Heart right ventricle (tissue), 16 donors: ENCODE measurements at regions of chr5 and their contacts with region 1.

Region 1: GRCh38 chr5:140220032-140220697 is 45.2 kb downstream of the CYSTM1 start:
- DNase-seq: no peak
- ATAC-seq: no peak
- H3K4me3 ChIP-seq: no peak overlapping the region
- H3K27ac ChIP-seq: peak overlapping the region in 9 of 10 donors; percentile 4 to 87 (median 80)
- H3K4me1 ChIP-seq: peaks cover 18 to 95% (median 81%) of the 10 kb centered on the region in 9 donors
- H3K27me3 ChIP-seq: no peaks in the 10 kb centered on the region
- CTCF ChIP-seq: no peak

Region 2: DNA sequence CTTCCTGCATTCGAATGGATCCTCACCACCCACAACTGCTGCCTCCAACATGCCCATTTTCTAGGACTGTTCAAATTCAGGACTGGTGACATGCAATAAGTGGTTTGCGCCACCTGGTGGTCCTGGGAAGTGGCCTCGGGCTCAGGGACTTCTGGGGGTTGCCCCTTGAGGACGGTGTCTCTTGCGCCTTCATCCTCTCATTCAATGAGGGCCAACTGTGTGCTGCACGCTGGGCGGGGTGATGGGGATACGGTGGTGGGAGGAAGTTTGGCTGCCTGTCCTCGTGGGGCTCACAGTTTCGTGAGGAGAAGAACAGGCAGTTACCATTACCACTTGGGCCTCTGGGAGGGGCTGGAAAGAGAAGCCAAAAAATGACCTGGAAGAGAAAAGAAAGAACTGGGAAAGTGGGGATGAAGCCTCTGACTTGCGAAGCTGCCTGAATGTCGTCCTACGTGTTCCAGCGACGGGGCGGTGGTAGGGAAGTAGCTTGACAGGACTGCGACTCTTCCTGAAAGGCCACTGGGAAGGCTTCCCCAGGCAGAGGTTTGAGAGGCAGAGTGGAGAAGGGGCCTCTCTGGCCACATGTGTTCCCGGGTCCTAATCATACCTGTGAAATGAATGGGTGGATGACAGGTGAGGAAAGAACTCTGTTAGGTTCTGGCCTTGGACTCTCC is 375.6 kb before region 1 on chr5:
- intact Hi-C with region 1: no loop called
- DNase-seq: peak; percentile 66 to 69
- ATAC-seq: peak in 4 of 8 donors; percentile 29 to 37 (median 35)
- H3K4me3 ChIP-seq: no peak overlapping the region
- H3K27ac ChIP-seq: no peak overlapping the region
- H3K4me1 ChIP-seq: peaks cover 3 to 25% (median 17%) of the 10 kb centered on the region in 9 donors
- H3K27me3 ChIP-seq: peaks cover 0 to 44% (median 0%) of the 10 kb centered on the region in 7 donors
- CTCF ChIP-seq: peak; percentile 38 to 76 (median 69)

Region 3: DNA sequence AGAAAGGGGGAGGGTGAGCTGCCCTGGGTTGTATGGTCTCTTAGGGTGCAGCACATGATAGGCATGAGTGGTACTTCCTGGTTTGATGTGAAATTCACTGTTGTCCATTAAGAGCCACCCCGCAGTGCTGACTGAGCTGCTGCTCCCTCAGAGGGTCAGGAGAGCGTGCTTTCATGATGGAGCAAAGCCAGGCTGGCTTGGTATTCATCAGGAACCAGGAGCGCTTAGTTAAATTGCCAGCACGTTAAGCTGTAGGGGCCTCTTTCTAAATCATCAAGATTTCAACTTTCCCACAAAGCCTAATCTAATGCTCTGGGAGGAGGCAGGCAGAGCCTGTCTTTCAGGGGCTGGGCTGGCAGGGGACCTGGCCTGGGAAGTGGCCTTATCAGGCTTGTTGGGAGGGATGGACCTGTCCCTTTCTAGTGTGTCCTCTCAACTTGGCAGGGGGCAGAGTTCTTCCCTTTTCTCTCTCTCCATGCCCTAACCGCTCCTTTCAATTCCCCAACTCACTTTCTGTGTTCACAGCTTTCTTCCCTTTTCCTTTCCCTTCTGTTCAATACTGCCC is 37.3 kb before region 1 on chr5:
- intact Hi-C with region 1: loop called in 6 of 10 experiments (anchors 5 kb)
- DNase-seq: peak in 1 of 2 donors; percentile 39
- ATAC-seq: peak; percentile 61 to 84 (median 73)
- H3K4me3 ChIP-seq: peak overlapping the region in 1 of 10 donors; percentile 9
- H3K27ac ChIP-seq: peak overlapping the region in 9 of 10 donors; percentile 9 to 83 (median 68)
- H3K4me1 ChIP-seq: peaks cover 18 to 78% (median 66%) of the 10 kb centered on the region in 9 donors
- H3K27me3 ChIP-seq: no peaks in the 10 kb centered on the region
- CTCF ChIP-seq: peak in 1 of 9 donors; percentile 4

Region 4: DNA sequence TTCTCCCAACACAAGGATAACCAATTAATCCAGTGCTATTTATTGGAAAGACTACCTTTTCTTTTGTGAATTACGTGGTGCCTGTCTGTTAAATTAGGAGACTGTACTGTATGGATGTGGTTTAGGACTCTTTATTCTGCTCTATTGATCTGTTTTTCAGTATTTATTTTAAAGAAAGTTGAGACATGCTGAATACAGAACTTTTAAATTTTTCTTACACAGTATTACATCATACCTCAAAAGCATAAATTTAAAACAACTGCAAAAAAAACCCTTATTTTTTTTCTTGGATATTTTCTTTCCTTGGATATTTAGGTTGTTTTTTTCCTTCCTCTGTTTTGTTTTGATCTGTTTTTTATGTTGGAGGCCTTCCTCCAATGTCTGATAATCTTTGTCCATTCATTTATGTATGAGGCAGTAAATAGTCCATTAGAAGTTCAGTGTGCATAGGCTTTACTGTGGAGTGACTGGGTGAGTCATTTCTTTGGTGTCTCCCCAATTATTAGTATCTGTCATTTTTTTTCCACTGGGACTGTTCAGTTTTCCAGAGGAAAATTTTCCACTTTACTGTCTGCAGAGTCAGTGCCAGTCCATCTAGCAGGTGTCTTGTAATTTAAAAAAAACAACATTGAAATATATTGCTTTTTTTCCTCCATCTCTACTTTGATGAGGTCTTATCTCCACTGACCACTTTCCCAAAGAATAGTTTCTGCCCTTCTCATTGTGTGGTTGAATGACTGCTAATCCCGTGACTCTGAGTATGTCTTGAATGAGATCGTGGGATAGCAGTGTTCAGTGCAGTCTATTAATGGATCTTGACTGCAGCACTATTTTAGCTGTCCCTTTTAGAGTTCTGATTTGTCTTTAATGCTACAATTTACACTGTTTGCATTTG is 29.9 kb before region 1 on chr5:
- intact Hi-C with region 1: loop called in 2 of 10 experiments (anchors 2 to 5 kb)
- DNase-seq: no peak
- ATAC-seq: peak; percentile 68 to 89 (median 79)
- H3K4me3 ChIP-seq: peak overlapping the region in 2 of 10 donors; percentile 4 to 18
- H3K27ac ChIP-seq: peak overlapping the region in 9 of 10 donors; percentile 25 to 81 (median 62)
- H3K4me1 ChIP-seq: peaks cover 4 to 75% (median 45%) of the 10 kb centered on the region in 9 donors
- H3K27me3 ChIP-seq: no peaks in the 10 kb centered on the region
- CTCF ChIP-seq: no peak